ENCODE measurements at regions of chr1 and their contacts with region 1.

Region 1: DNA sequence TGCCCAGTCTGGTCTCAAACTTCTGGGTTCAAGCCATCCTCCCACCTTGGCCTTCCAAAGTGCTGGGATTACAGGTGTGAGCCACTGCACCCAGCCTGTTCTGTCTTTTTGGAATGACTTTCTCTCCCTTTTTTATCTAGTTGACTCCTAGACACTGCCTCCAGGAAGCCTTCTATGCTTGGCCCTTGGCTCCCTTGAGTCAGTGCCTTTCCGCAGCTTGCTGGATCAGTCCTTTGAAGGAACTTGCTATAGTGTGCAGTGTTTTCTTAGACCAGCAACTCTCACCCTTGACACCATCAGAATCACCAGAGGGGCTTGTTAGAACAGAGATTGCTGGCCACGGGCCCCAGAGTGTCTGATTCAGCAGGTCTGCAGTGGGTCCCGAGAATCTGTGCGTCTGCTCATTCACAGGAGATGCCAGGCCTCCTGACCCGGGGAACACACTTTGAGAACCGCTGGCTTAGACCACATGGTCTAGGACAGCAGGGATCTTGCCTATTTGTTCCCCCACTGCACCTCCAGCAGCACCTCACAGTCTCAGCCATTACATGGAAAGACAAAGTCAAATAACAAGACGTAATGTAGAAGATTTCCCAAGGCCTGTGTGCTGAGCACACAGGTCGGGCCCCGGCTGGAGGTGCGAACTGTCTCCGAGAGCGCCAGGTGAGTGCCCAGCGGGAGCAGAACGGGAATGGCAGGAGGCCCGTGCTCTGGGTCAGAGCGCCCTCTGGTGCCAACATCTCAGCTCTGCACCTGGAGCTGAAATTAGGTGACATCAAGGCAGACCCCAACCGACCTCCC is 27.4 kb upstream of the CTPS1 start:
- DNase-seq: peak; percentile 75
- ATAC-seq: peak; percentile 72
- H3K4me3 Mint-ChIP-seq: no peak overlapping the region
- H3K27ac Mint-ChIP-seq: no peak overlapping the region
- H3K4me1 Mint-ChIP-seq: no peaks in the 10 kb centered on the region
- H3K27me3 Mint-ChIP-seq: peaks cover 25% of the 10 kb centered on the region

Region 2: GRCh38 chr1:40774266-40774998 is 177.7 kb before region 1 on chr1:
- CTCF ChIA-PET with region 1: interaction called, 33 read pairs
- POLR2A ChIA-PET with region 1: no interaction called
- intact Hi-C with region 1: loop called in 1 of 2 experiments (anchors 1 kb)
- DNase-seq: peak; percentile 81
- ATAC-seq: peak; percentile 68
- H3K4me3 Mint-ChIP-seq: no peak overlapping the region
- H3K27ac Mint-ChIP-seq: no peak overlapping the region
- H3K4me1 Mint-ChIP-seq: no peaks in the 10 kb centered on the region
- H3K27me3 Mint-ChIP-seq: no peaks in the 10 kb centered on the region

Region 3: GRCh38 chr1:40849801-40850592 is 102.1 kb before region 1 on chr1:
- CTCF ChIA-PET with region 1: interaction called, 12 read pairs
- POLR2A ChIA-PET with region 1: no interaction called
- intact Hi-C with region 1: loop called (anchors 1 to 2 kb)
- DNase-seq: peak; percentile 88
- ATAC-seq: peak; percentile 90
- H3K4me3 Mint-ChIP-seq: no peak overlapping the region
- H3K27ac Mint-ChIP-seq: no peak overlapping the region
- H3K4me1 Mint-ChIP-seq: peaks cover 10% of the 10 kb centered on the region
- H3K27me3 Mint-ChIP-seq: no peaks in the 10 kb centered on the region

Region 4: DNA sequence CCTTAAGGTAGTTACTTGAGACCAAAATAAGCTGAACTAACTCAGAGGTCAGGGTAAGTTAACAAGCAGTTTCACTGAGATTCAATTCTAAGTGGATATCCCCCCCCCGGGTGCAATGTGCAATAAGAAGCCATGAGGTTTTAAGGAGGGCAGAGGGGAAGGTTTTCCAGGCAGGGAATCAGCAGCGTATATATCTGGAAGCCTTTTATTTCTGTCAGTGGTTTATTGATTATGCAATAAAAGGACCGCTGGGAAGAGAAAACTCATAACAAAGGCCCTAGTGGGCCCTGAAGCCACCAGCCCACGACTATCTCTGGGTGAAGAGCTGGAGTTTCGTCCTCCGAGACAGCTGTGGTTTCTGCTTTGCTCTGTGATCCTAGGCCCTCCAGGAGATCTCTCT is 25.7 kb before region 1 on chr1:
- CTCF ChIA-PET with region 1: interaction called, 10 read pairs
- POLR2A ChIA-PET with region 1: no interaction called
- intact Hi-C with region 1: no loop called
- DNase-seq: no peak
- ATAC-seq: no peak
- H3K4me3 Mint-ChIP-seq: no peak overlapping the region
- H3K27ac Mint-ChIP-seq: no peak overlapping the region
- H3K4me1 Mint-ChIP-seq: no peaks in the 10 kb centered on the region
- H3K27me3 Mint-ChIP-seq: peaks cover 2% of the 10 kb centered on the region

Region 5: DNA sequence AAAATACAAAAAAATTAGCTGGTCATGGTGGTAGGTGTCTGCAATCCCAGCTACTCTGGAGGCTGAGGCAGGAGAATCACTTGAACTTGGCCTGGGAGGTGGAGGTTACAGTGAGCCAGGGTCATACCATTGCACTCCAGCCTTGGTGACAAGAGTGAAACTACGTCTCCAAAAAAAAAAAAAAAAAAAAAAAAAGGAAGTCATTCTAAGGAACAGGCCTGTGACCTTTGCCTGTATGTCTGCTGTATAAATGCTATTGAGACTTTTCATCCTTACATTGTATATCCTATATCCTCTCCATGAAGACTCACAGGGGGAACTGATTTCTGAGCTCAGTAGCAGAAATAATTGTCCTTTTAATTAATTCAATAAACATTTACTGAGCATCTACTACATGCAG is 19.8 kb after region 1 on chr1:
- CTCF ChIA-PET with region 1: interaction called, 14 read pairs
- POLR2A ChIA-PET with region 1: no interaction called
- intact Hi-C with region 1: no loop called
- DNase-seq: no peak
- ATAC-seq: no peak
- H3K4me3 Mint-ChIP-seq: no peak overlapping the region
- H3K27ac Mint-ChIP-seq: no peak overlapping the region
- H3K4me1 Mint-ChIP-seq: peaks cover 4% of the 10 kb centered on the region
- H3K27me3 Mint-ChIP-seq: no peaks in the 10 kb centered on the region

Measured in activated CD4-positive, alpha-beta T cell treated with anti-CD3 and anti-CD28 coated beads for 36 hours (primary cell).